Activated T-helper 1 cell treated with anti-CD3 and anti-CD28 coated beads, Interleukin-12 subunit alpha, Interleukin-12 subunit beta, Interleukin-2, Interleukin-4 antibody, amounts not matched to agents 30 ng/mL and 10 ng/mL and 1 ng/mL, durations not matched to agents 14 hours and 24 hours and 36 hours (primary cell): ENCODE measurements at regions of chr6 and their contacts with region 1.

Region 1: DNA sequence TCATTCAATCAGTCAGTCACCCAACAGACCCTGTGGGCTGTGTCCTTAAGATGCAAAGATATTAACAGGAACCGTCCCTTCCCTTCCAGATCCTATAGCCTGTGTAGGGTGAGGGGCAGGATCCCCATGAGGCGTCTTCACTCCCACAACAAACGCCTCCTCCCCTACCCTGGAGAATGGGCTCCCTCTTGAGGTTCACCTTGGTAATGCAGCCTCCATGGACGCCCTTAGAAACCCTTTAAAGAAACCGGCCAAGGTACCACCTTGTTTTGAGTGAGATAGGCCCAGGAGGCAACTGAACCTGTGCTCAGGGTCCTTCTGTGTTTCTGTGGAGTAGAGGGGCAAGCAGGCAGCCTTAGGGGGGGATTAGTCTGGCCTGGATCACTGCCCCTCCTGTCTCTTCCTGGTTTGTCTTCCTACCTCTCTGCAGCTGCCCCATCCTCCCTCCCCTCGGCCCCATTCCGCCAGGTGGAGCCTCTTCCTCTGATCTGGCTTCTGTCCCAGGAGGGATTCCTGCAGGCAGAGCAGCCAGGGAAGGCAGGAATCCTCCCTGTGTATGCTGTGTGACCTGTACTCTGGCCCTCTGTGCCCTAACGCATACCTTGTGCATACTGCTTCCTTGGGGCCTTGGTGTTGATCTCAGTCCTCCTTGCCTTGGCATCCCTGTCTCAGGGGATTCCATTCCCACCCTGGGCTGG is 6.6 kb upstream of the GUCA1A start:
- DNase-seq: peak; percentile 68
- H3K4me3 Mint-ChIP-seq: no peak overlapping the region
- H3K27ac Mint-ChIP-seq: no peak overlapping the region
- H3K4me1 Mint-ChIP-seq: peaks cover 7% of the 10 kb centered on the region
- H3K27me3 Mint-ChIP-seq: peaks cover 7% of the 10 kb centered on the region

Region 2: DNA sequence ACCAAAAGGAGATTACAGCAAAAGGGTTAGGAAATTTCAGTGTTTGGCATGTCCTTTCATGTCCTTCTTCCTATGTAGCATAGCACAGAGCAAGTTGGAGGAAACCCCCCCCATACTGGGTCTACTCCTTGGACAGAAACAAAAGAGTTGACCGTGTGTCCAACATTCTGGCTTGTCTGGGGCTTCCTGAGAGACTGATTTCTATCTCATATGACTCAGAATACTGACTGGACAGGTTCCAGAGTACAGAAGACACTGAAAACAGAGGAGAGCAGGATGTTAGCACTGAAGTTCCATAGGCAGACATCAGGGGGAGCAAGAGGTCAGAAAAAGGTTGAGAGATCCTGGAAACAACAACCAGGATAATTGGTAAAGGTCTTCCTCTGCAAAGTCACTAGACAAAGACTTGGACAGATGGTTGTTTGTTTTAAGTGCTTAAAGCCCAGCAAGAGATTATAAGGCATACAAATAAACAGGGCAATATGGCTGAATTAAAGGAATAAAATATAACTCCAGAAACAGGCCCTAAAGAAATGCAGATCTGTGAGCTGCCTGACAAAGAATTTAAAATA is 319.8 kb before region 1 on chr6:
- intact Hi-C with region 1: loop called (anchors 1 kb)
- DNase-seq: peak; percentile 31
- H3K4me3 Mint-ChIP-seq: no peak overlapping the region
- H3K27ac Mint-ChIP-seq: no peak overlapping the region
- H3K4me1 Mint-ChIP-seq: peaks cover 11% of the 10 kb centered on the region
- H3K27me3 Mint-ChIP-seq: no peaks in the 10 kb centered on the region

Region 3: GRCh38 chr6:42075159-42075838 is 91.3 kb before region 1 on chr6:
- intact Hi-C with region 1: loop called (anchors 1 kb)
- DNase-seq: peak; percentile 33
- H3K4me3 Mint-ChIP-seq: no peak overlapping the region
- H3K27ac Mint-ChIP-seq: no peak overlapping the region
- H3K4me1 Mint-ChIP-seq: peaks cover 8% of the 10 kb centered on the region
- H3K27me3 Mint-ChIP-seq: no peaks in the 10 kb centered on the region